ENCODE measurements at regions of chr9 and their contacts with region 1.

Region 1: DNA sequence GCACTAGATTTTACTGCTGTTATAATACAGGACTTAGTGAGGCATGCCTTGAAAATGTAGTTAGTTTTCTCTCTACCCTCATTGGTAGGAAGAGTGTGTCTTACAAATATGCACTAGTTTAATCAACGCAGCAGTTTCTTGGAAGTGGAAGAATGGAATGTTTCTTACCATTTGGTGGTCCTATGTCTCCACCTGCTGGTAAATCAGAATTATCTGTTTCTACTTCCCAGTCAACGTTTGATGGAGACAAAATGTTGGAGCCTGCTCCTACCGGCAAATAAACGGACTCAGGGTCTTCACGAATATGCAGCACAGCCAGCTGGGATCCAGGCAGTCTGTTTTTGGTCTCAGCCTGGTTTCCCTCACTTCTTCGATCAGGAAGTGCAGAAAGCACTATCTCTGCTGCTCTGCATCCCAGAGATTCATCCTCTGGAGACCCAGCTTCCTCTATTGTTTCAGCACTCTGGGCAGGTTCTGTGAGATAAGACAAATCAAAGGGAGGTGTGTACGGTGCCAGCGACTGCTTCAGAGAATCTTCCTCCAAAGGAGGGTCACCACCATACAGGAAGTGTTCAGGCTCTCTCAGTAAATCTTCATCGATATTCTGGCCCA is 59.5 kb upstream of the PCA3 start:
- DNase-seq: peak in 1 of 2 experiments; percentile 7
- H3K4me3 ChIP-seq: no peak overlapping the region
- H3K27ac ChIP-seq: no peak overlapping the region
- H3K4me1 ChIP-seq: peaks cover 0 to 4% (median 0%) of the 10 kb centered on the region in 4 experiments; a peak in 1 of 7 replicates
- H3K27me3 ChIP-seq: no peaks in the 10 kb centered on the region
- CTCF ChIP-seq: peak in 2 of 3 experiments; percentile 68 to 70; a peak in 3 of 4 replicates
- EP300 ChIP-seq: no peak
- POLR2A ChIP-seq: no peak
- RAD21 ChIP-seq: peak; percentile 96 to 97

Region 2: DNA sequence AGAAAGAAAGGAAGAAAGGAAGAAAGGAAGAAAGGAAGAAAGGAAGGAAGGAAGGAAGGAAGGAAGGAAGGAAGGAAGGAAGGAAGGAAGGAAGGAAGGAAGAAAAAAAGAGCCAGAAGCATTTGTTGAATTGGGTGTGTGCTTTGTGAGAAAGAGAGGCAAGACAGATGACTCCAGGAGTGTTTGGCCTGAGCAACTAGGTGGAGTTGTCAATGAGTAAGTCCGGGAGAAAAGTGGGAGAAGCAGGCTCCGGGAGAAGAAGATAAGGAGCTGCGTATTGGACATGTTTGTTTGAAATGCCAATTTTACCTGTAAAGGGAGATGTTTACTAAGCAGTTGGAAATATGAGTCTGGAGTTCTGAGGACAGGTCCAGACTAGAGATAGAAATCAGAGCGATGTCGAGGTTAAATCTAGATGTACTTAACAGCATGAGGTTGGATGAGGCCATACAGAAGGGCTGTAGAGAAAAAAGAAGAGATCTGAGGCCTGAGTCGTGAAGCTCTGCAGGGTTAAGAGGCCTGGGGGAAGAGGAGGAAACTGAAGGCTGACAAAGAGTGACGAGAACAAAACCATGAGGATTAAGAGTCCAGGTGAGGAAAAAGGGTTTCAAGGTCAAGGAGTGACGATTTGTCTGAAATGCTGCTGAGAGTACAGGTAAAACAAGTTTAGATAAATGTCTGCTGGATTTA is 260.7 kb before region 1 on chr9:
- CTCF ChIA-PET with region 1: interaction called, 29 read pairs
- POLR2A ChIA-PET with region 1: no interaction called
- DNase-seq: no peak
- H3K4me3 ChIP-seq: no peak overlapping the region
- H3K27ac ChIP-seq: no peak overlapping the region
- H3K4me1 ChIP-seq: peaks cover 0 to 3% (median 0%) of the 10 kb centered on the region in 4 experiments; a peak in 1 of 7 replicates
- H3K27me3 ChIP-seq: no peaks in the 10 kb centered on the region
- CTCF ChIP-seq: no peak
- EP300 ChIP-seq: no peak
- POLR2A ChIP-seq: no peak
- RAD21 ChIP-seq: no peak

Region 3: GRCh38 chr9:76643399-76644117 is 61.1 kb before region 1 on chr9:
- CTCF ChIA-PET with region 1: no interaction called
- POLR2A ChIA-PET with region 1: no interaction called
- DNase-seq: peak in 1 of 2 experiments; percentile 52
- H3K4me3 ChIP-seq: no peak overlapping the region; a peak in 1 of 8 replicates
- H3K27ac ChIP-seq: no peak overlapping the region
- H3K4me1 ChIP-seq: peaks cover 8 to 13% (median 8%) of the 10 kb centered on the region in 4 experiments
- H3K27me3 ChIP-seq: no peaks in the 10 kb centered on the region
- CTCF ChIP-seq: no peak
- EP300 ChIP-seq: no peak
- POLR2A ChIP-seq: no peak
- RAD21 ChIP-seq: no peak

Region 4: GRCh38 chr9:76658535-76659231 is 46.0 kb before region 1 on chr9:
- CTCF ChIA-PET with region 1: interaction called, 168 read pairs
- POLR2A ChIA-PET with region 1: no interaction called
- DNase-seq: no peak
- H3K4me3 ChIP-seq: no peak overlapping the region; a peak in 1 of 8 replicates
- H3K27ac ChIP-seq: no peak overlapping the region
- H3K4me1 ChIP-seq: peaks cover 0 to 5% (median 1%) of the 10 kb centered on the region in 4 experiments; a peak in 3 of 7 replicates
- H3K27me3 ChIP-seq: no peaks in the 10 kb centered on the region
- CTCF ChIP-seq: peak in 2 of 3 experiments; percentile 60 to 69; a peak in 3 of 4 replicates
- EP300 ChIP-seq: no peak
- POLR2A ChIP-seq: no peak
- RAD21 ChIP-seq: peak; percentile 91

Region 5: GRCh38 chr9:76687861-76688391 is 16.8 kb before region 1 on chr9:
- CTCF ChIA-PET with region 1: interaction called, 40 read pairs
- POLR2A ChIA-PET with region 1: interaction called, 3 read pairs
- DNase-seq: peak in 1 of 2 experiments; percentile 23
- H3K4me3 ChIP-seq: no peak overlapping the region
- H3K27ac ChIP-seq: no peak overlapping the region
- H3K4me1 ChIP-seq: peaks cover 3 to 10% (median 7%) of the 10 kb centered on the region in 4 experiments; a peak in 6 of 7 replicates
- H3K27me3 ChIP-seq: peaks cover 0 to 15% (median 8%) of the 10 kb centered on the region in 4 experiments; a peak in 4 of 7 replicates
- CTCF ChIP-seq: no peak
- EP300 ChIP-seq: no peak
- POLR2A ChIP-seq: no peak
- RAD21 ChIP-seq: no peak

Region 6: DNA sequence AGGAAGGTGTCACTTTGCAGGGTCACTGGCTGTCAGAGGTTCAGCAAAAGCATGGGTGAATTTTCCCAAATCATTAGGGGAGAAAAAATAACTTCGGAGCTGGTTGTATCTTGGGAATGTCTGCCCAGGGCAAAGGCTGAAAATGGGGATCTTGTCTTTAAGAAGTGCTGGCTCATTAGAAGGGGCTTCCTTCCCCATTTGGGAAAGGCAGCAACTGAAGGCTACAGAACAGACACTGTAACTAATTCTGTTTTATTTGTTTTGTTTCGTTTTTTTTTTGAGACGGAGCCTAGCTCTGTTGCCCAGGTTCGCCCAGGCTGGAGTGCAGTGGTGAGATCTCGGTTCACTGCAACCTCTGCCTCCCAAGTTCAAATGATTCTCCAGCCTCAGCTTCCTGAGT is 10.8 kb before region 1 on chr9:
- CTCF ChIA-PET with region 1: interaction called, 40 read pairs
- POLR2A ChIA-PET with region 1: interaction called, 3 read pairs
- DNase-seq: peak in 1 of 2 experiments; percentile 19
- H3K4me3 ChIP-seq: no peak overlapping the region
- H3K27ac ChIP-seq: no peak overlapping the region
- H3K4me1 ChIP-seq: peaks cover 3 to 10% (median 7%) of the 10 kb centered on the region in 4 experiments; a peak in 6 of 7 replicates
- H3K27me3 ChIP-seq: peaks cover 0 to 15% (median 7%) of the 10 kb centered on the region in 4 experiments; a peak in 5 of 7 replicates
- CTCF ChIP-seq: no peak
- EP300 ChIP-seq: no peak
- POLR2A ChIP-seq: no peak
- RAD21 ChIP-seq: no peak

Region 7: GRCh38 chr9:76717613-76718012 is 12.9 kb after region 1 on chr9:
- CTCF ChIA-PET with region 1: interaction called, 12 read pairs
- POLR2A ChIA-PET with region 1: no interaction called
- DNase-seq: no peak
- H3K4me3 ChIP-seq: no peak overlapping the region
- H3K27ac ChIP-seq: no peak overlapping the region
- H3K4me1 ChIP-seq: no peaks in the 10 kb centered on the region
- H3K27me3 ChIP-seq: no peaks in the 10 kb centered on the region
- CTCF ChIP-seq: no peak
- EP300 ChIP-seq: no peak
- POLR2A ChIP-seq: no peak
- RAD21 ChIP-seq: no peak

Region 8: DNA sequence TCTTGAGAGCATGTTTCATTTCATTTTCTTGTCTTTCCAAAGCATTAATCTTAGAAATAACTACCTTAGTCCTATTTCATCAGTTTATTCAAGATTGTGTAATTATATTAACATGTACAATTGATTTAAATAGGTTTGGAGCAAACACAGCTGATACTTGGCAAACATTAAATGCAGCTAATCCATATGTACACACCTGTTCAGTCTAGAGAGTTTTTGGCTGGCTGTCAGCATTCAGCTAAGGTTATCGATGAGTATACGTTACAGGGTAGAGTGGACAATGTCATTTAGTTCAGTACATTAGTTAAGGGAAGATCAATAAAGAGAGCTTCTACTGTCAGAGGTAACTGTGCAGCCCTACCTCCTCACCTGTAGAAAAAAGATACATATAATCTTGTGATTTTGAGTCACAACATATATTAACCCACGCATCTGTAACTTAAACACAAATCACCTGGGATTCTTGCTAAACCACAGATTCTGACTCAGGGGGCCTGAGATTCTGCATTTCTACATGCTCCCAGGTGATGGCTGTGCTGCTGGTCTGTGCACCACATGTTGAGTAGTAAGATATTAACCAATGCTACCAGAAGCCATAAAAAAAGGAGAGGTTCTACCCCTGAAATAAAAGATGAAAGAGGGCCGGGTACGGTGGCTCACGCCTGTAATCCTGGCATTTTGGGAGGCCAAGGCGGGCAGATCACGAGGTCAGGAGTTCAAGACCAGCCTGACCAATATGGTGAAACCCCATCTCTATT is 25.5 kb after region 1 on chr9:
- CTCF ChIA-PET with region 1: no interaction called
- POLR2A ChIA-PET with region 1: no interaction called
- DNase-seq: no peak
- H3K4me3 ChIP-seq: no peak overlapping the region
- H3K27ac ChIP-seq: no peak overlapping the region
- H3K4me1 ChIP-seq: no peaks in the 10 kb centered on the region
- H3K27me3 ChIP-seq: no peaks in the 10 kb centered on the region
- CTCF ChIP-seq: no peak
- EP300 ChIP-seq: no peak
- POLR2A ChIP-seq: no peak
- RAD21 ChIP-seq: no peak

Region 9: DNA sequence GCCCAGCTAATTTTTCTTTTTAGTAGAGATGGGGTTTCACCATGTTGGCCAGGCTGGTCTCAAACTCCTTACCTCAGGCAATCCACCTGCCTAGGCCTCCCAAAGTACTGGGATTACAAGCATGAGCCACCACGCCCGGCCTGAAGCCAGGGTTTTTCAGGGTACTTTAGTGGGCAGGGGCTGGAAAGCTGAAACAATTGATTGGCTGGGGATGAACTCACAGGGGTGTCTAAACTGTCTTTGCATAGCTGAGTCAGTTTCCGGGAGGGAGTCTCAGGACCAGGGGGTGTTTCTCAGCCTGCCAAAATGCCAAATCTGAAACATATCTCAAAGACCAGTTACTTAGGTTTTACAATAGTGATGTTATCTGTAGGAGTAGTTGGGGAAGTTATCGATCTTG is 155.2 kb after region 1 on chr9:
- CTCF ChIA-PET with region 1: no interaction called
- POLR2A ChIA-PET with region 1: no interaction called
- DNase-seq: no peak
- H3K4me3 ChIP-seq: no peak overlapping the region
- H3K27ac ChIP-seq: no peak overlapping the region
- H3K4me1 ChIP-seq: no peaks in the 10 kb centered on the region
- H3K27me3 ChIP-seq: no peaks in the 10 kb centered on the region
- CTCF ChIP-seq: no peak
- EP300 ChIP-seq: no peak
- POLR2A ChIP-seq: no peak
- RAD21 ChIP-seq: no peak